ENCODE measurements at regions of chr9 and their contacts with region 1.

Region 1: DNA sequence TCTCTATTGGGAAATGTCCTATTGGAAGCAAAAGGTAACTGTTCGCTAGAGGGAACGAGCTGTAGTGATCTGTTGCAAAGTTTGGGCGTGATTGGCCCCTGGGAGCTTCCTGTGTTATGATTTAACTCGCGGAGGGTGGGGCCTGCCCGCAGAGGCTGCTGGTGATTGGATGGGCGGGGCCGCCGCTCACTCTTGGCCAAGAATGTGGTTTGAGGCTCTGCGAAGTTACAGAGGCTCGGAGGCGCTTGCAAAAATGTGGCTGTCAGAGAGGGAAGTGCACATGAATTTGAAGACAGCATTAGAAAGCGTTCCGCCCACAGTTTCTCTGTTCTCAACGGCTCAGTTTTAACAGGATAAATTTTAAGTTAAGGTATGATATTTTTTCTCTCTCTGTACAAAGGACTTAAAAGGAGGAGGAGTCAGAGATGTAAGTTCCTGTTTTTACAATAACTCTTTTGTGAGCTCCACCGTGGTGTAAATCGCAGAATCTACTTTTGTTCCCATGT is 46.9 kb downstream of the CNTRL start:
- DNase-seq: peak; percentile 99
- H3K4me3 Mint-ChIP-seq: peak overlapping the region; percentile 73
- H3K27ac Mint-ChIP-seq: peak overlapping the region; percentile 91
- H3K4me1 Mint-ChIP-seq: peaks cover 44% of the 10 kb centered on the region
- H3K27me3 Mint-ChIP-seq: no peaks in the 10 kb centered on the region

Region 2: GRCh38 chr9:121133149-121133816 is 11.6 kb after region 1 on chr9:
- CTCF ChIA-PET with region 1: interaction called, 4 read pairs
- intact Hi-C with region 1: loop called (anchors 1 kb)
- DNase-seq: peak; percentile 83
- H3K4me3 Mint-ChIP-seq: no peak overlapping the region
- H3K27ac Mint-ChIP-seq: peak overlapping the region; percentile 63
- H3K4me1 Mint-ChIP-seq: peaks cover 60% of the 10 kb centered on the region
- H3K27me3 Mint-ChIP-seq: no peaks in the 10 kb centered on the region

Region 3: DNA sequence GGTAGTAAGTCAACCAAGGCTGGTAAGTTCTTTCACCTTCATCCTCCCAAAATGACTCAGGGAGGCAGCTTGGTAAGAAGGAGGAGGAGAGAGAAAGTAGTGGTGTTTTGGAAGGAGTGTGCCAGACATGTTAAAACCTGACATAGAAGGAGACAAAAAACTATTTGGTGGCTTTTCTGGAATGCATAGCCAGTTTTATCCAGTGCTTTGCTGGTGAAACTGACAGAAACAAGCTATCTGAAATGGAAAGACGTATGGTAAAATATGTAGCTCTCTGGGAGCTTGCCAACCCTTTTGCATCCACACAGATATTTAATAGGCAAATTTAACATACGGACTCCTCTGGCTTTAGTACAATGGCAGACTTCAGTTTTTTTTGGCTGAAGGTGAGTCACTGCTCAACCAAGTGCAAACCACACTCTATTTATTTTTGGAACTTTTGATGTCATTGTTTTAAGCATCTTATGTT is 34.7 kb after region 1 on chr9:
- CTCF ChIA-PET with region 1: interaction called, 3 read pairs
- intact Hi-C with region 1: loop called (anchors 1 kb)
- DNase-seq: peak; percentile 26
- H3K4me3 Mint-ChIP-seq: no peak overlapping the region
- H3K27ac Mint-ChIP-seq: peak overlapping the region; percentile 87
- H3K4me1 Mint-ChIP-seq: peaks cover 31% of the 10 kb centered on the region
- H3K27me3 Mint-ChIP-seq: no peaks in the 10 kb centered on the region